K562 (cell line): ENCODE measurements at regions of chrX and their contacts with region 1.

Region 1: DNA sequence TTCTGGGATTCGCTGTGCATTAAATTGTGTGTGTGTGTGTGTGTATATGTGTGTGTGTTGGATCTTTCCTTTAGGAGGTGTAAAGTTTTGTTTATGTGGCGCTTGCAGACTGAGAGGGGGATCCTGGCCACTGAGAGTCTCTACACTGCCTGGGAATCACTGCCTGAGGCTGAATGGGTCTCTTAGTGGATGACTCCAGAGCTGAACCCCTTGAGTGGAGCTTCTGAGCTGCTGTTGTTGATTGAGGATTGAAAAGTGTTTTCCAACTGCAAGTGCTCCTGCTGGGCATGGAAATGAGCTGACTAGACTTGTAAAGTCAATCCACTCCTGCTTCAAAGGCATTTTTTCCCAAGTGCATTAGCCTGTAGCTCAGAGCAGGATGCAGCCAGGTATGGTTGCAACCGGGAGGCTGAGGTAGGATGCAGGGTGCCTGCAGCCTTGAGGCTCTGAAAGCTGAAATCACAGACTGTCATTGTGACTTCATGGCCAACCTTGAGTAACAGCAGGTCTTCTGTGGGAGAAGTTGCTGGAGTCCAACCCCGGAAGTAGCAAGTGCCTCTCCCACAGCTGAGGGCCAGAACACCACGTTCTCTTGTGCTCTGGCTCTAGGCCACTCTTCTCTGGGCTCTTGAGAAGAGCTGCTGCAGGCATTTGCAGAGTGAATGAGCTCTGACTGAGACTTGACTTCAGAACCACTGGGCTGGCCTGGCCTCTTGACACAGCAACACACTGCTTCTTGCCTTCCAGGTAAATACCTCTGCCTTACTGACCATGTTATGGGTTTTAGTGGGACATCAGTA is at the start of gene TBX22:
- DNase-seq: no peak
- ATAC-seq: no peak
- H3K4me3 ChIP-seq: no peak within 1 kb of the TSS
- H3K27ac ChIP-seq: no peak within 1 kb of the TSS
- H3K4me1 ChIP-seq: no peaks in the 10 kb centered on the region
- H3K27me3 ChIP-seq: no peaks in the 10 kb centered on the region
- CTCF ChIP-seq: no peak
- EP300 ChIP-seq: no peak
- POLR2A ChIP-seq: no peak
- RAD21 ChIP-seq: no peak
- polyA plus RNA-seq, gene TBX22: not detected

Region 2: GRCh38 chrX:78092296-78092695 is 1922.0 kb before region 1 on chrX:
- CTCF ChIA-PET with region 1: no interaction called
- POLR2A ChIA-PET with region 1: no interaction called
- in situ Hi-C with region 1: loop called (anchors 10 kb)
- intact Hi-C with region 1: no loop called
- DNase-seq: peak in 1 of 4 experiments; percentile 41
- ATAC-seq: peak; percentile 91
- H3K4me3 ChIP-seq: no peak overlapping the region
- H3K27ac ChIP-seq: no peak overlapping the region
- H3K4me1 ChIP-seq: no peaks in the 10 kb centered on the region
- H3K27me3 ChIP-seq: no peaks in the 10 kb centered on the region
- CTCF ChIP-seq: peak; percentile 45 to 49 (median 45)
- EP300 ChIP-seq: no peak
- POLR2A ChIP-seq: no peak
- RAD21 ChIP-seq: peak in 1 of 2 experiments; percentile 39; a peak in 2 of 4 replicates